ENCODE measurements at regions of chr7 and their contacts with region 1.

Region 1: GRCh38 chr7:99143853-99144672 is at the start of gene SMURF1:
- DNase-seq: peak; percentile 86
- ATAC-seq: peak; percentile 55
- H3K4me3 Mint-ChIP-seq: peak within 1 kb of the TSS; percentile 89
- H3K27ac Mint-ChIP-seq: peak within 1 kb of the TSS; percentile 81
- H3K4me1 Mint-ChIP-seq: peaks cover 39% of the 10 kb centered on the region
- H3K27me3 Mint-ChIP-seq: peaks cover 7% of the 10 kb centered on the region
- CTCF ChIP-seq: no peak
- total RNA-seq, gene SMURF1: 21.6 and 23.1 TPM in 2 replicates

Region 2: DNA sequence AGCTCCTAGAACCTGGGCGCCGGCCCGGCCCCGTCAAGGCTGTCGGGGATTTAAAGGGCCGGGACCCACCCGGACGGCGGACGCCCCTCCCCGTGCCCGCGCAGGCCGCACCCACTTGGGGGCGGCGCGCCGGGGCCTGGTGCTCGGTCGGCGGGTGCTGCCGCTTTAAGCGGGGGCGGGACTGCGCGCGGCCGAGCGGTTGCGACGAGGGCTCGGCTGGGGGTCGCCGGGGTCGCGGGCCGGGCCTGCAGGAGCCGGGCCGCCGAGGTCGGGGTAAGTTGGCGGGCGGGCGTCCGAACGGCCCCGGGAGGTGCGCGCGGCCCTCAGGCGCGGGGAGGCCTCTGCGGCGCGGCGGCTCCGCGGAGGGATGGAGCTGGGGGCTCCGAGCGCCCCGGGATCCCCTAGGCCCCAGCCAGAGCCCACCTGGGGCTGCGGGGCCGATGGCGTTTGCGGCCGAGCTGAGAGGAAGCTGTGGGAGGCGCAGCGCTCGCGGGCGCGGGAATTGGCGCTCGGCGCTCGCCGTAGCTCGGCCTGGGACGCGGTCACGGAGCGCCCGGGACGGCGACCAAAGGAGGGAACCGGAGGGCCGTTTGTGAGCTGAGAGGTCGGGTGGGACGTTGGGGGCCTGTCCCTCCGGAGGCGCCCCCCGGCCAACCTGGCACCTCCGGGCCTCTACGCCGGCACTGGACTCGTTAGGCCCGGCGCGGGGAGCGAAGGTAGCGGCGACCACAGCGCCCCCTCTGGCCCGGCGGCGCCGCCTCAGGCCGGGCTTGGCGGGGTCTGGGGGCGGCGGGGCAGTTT is 265.5 kb before region 1 on chr7 and contains the start of gene TRRAP:
- CTCF ChIA-PET with region 1: no interaction called
- POLR2A ChIA-PET with region 1: interaction called, 5 read pairs
- intact Hi-C with region 1: loop called (anchors 2 kb)
- DNase-seq: peak; percentile 80
- ATAC-seq: peak; percentile 81
- H3K4me3 Mint-ChIP-seq: peak within 1 kb of the TSS; percentile 91
- H3K27ac Mint-ChIP-seq: peak within 1 kb of the TSS; percentile 93
- H3K4me1 Mint-ChIP-seq: peaks cover 19% of the 10 kb centered on the region
- H3K27me3 Mint-ChIP-seq: peaks cover 3% of the 10 kb centered on the region
- CTCF ChIP-seq: peak; percentile 82
- total RNA-seq, gene TRRAP: 73.9 and 77.9 TPM in 2 replicates

Region 3: DNA sequence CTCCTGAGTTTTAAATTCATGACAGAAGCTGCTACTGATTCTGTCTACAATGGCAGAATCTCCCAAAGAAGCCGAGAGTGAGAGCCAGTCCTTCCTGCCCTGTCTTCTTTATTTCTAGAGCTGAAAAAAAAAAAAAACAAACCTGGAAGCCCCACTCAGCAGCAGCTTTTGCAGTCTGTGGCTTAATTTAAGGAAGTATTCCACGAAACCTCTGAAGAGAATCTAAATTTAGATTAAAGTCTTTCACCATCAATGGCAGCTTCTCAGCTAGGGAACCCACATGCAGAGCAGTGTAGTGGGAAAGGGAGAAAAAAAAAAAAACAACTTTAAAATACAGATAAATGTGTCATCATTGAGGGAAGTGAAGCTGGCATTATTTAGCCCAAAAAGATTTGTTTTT is 23.6 kb before region 1 on chr7:
- CTCF ChIA-PET with region 1: no interaction called
- POLR2A ChIA-PET with region 1: interaction called, 9 read pairs
- intact Hi-C with region 1: loop called (anchors 2 kb)
- DNase-seq: no peak
- ATAC-seq: no peak
- H3K4me3 Mint-ChIP-seq: no peak overlapping the region
- H3K27ac Mint-ChIP-seq: no peak overlapping the region
- H3K4me1 Mint-ChIP-seq: peaks cover 66% of the 10 kb centered on the region
- H3K27me3 Mint-ChIP-seq: no peaks in the 10 kb centered on the region
- CTCF ChIP-seq: no peak

Region 4: GRCh38 chr7:99325545-99326407 is 181.7 kb after region 1 on chr7 and contains the start of gene ARPC1A:
- CTCF ChIA-PET with region 1: no interaction called
- POLR2A ChIA-PET with region 1: no interaction called
- intact Hi-C with region 1: loop called (anchors 1 kb)
- DNase-seq: peak; percentile 93
- ATAC-seq: peak; percentile 93
- H3K4me3 Mint-ChIP-seq: peak within 1 kb of the TSS; percentile 93
- H3K27ac Mint-ChIP-seq: peak within 1 kb of the TSS; percentile 89
- H3K4me1 Mint-ChIP-seq: peaks cover 42% of the 10 kb centered on the region
- H3K27me3 Mint-ChIP-seq: no peaks in the 10 kb centered on the region
- CTCF ChIP-seq: no peak
- total RNA-seq, gene ARPC1A: 47.3 and 51.6 TPM in 2 replicates

Region 5: GRCh38 chr7:99465421-99465768 is 321.3 kb after region 1 on chr7:
- CTCF ChIA-PET with region 1: no interaction called
- POLR2A ChIA-PET with region 1: no interaction called
- intact Hi-C with region 1: loop called (anchors 5 kb)
- DNase-seq: no peak
- ATAC-seq: no peak
- H3K4me3 Mint-ChIP-seq: peak overlapping the region; percentile 96
- H3K27ac Mint-ChIP-seq: peak overlapping the region; percentile 90
- H3K4me1 Mint-ChIP-seq: peaks cover 36% of the 10 kb centered on the region
- H3K27me3 Mint-ChIP-seq: no peaks in the 10 kb centered on the region
- CTCF ChIP-seq: no peak

Region 6: DNA sequence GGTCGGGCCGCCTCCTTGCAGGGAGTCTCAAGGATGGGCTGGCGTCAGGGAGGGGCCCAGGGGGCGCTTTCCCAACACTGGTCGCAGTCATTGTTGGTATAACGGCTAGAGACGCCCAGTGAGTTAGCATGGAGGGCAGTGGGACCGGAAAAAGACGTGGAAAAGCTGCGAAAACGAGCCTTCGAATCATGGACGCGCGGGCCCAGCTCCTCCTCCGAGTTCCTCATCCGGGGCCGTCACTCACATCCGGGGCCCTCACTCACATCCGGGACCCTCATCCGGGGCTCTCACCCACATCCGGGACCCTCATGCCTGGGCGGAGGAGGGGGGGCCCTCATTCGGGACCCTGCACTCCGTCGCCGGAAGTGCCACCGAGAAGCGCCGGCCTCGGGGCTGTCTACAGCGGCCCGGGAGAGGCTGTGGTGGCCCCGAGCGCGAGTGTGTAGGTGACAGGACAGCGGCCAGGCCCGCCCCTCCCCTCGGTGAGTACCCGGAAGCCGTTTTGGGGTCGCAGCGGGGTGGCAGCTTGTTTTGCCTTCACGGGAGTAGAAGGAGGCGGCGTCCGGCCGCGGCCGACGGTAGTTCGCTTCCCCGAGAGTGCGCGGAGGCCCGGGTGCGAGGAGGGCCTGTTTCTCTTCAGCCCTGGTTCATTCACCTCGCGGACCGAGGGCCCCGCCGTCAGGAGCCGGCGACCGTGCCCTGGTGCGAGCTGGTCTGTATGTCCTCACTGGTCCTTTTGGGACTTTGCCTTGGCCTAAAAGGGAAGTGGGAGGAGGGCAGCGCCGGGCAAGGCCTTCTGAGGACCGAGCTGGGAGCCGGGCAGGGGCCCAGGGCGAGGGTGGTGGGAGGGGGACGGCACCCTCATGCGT is 414.5 kb after region 1 on chr7 and contains the start of gene ZNF655:
- CTCF ChIA-PET with region 1: no interaction called
- POLR2A ChIA-PET with region 1: interaction called, 4 read pairs
- intact Hi-C with region 1: loop called (anchors 2 kb)
- DNase-seq: peak; percentile 85
- ATAC-seq: peak; percentile 79
- H3K4me3 Mint-ChIP-seq: peak within 1 kb of the TSS; percentile 97
- H3K27ac Mint-ChIP-seq: peak within 1 kb of the TSS; percentile 97
- H3K4me1 Mint-ChIP-seq: peaks cover 49% of the 10 kb centered on the region
- H3K27me3 Mint-ChIP-seq: no peaks in the 10 kb centered on the region
- CTCF ChIP-seq: no peak
- total RNA-seq, gene ZNF655: 98.5 and 116 TPM in 2 replicates

Measured in activated B cell treated with CpG ODN at 0.5 μM for 24 hours (primary cell).